ENCODE measurements at regions of chr10 and their contacts with region 1.

Region 1: DNA sequence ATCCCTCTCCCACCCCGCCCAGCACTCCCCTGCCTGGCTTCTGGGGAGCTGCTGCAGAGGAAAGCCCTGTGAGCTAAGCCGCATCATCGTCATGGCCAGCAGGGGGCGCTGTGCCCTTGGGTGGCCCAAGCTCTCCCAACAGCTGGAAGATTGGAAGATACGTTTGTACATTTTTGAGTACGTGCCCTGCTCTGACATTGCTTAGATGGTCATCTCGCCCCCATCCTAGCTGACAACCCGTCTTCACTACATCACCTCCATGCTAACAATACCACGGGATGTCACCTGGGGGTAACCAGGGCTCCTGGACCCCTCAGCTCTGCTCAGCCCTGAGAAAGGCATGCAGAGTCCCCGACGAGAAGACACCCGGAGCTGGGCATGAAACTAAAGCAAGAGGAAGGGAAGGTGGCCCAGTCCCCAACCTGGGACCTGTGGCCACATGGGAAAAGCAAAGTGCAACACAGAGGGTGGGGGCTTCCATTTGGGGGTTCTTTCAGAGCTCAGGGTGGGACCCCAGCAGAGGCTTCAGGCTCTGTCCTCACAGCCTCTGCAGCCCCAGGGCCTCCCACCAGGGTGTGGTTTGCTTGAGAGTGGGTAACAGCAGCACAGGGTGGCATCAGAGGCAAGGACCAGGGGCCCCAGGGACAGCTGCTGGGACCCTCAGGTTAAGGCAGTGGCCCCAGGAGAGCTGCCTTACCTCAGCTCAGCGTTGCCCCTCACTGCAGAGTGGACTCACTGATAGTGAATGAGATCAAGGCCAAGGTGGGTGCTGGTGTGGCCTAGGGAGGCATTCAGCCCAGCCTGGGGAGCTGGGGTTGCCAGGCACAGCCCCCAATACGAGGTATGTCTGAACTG is 136.7 kb downstream of the PTPN20 start:
- DNase-seq: peak; percentile 92
- H3K4me3 Mint-ChIP-seq: no peak overlapping the region
- H3K27ac Mint-ChIP-seq: peak overlapping the region; percentile 18
- H3K4me1 Mint-ChIP-seq: peaks cover 6% of the 10 kb centered on the region
- H3K27me3 Mint-ChIP-seq: no peaks in the 10 kb centered on the region

Region 2: DNA sequence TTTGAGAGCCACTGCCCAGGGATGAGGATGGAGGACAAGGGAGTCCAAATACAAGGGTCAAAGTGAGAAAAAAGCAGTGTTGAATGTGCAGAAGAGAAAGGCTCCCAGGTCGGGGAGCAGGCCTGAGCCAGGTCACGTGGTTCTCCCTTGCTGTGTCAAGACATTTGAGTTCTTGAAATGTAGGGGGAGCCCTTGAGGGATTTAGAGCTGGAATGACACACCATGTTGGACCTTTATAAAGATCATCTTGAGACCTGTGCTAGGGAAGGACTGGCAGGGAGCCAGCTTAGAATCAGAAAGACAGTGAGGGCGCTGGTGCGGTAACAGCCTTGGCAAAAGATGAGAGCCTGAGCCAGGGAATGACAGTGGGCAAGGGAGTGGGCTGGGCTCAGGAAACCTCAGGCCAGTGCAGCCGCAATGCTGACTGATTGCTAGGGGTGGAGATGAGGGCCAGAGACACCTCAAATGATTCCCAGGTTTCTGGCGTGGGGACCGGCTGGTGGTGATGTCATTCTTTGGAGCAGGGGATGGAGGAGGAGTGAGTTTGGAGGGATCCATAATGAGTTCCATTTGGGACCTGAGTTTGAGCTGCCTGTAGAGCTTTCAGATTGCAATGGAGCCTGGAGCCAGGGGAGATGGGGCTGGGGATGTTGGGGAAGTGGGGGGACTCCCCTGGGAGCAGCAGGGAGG is 16.5 kb before region 1 on chr10:
- intact Hi-C with region 1: no loop called
- DNase-seq: no peak
- H3K4me3 Mint-ChIP-seq: no peak overlapping the region
- H3K27ac Mint-ChIP-seq: no peak overlapping the region
- H3K4me1 Mint-ChIP-seq: no peaks in the 10 kb centered on the region
- H3K27me3 Mint-ChIP-seq: no peaks in the 10 kb centered on the region

Region 3: DNA sequence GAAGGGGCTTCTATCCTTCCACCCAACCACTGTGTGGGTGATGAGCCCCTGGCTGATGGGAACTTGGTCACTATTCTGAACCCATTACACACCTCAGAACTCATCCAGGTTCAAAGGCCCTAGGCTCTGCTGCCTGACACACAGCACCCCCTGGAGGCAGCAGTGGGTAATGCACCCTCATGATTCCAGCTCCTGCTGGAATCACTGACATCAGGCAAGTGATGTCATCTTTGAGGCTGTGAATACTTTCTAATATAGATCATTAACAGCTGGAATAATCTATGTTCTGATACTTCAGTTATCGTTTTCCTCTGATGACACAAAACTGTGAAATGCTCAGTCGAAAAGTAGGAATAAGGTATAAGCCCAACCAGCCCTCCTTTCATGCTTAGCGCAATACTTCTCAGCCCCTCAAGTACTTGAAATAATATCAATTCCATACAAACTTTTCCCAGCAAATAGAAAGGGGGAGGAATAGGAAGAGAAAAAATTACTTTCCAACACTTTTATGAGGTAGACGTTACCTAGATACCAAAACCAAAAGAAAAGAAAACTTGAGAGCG is 292.8 kb after region 1 on chr10:
- intact Hi-C with region 1: loop called (anchors 1 kb)
- DNase-seq: peak; percentile 90
- H3K4me3 Mint-ChIP-seq: no peak overlapping the region
- H3K27ac Mint-ChIP-seq: no peak overlapping the region
- H3K4me1 Mint-ChIP-seq: no peaks in the 10 kb centered on the region
- H3K27me3 Mint-ChIP-seq: peaks cover 10% of the 10 kb centered on the region